ENCODE measurements at regions of chr9 and their contacts with region 1.

Region 1: DNA sequence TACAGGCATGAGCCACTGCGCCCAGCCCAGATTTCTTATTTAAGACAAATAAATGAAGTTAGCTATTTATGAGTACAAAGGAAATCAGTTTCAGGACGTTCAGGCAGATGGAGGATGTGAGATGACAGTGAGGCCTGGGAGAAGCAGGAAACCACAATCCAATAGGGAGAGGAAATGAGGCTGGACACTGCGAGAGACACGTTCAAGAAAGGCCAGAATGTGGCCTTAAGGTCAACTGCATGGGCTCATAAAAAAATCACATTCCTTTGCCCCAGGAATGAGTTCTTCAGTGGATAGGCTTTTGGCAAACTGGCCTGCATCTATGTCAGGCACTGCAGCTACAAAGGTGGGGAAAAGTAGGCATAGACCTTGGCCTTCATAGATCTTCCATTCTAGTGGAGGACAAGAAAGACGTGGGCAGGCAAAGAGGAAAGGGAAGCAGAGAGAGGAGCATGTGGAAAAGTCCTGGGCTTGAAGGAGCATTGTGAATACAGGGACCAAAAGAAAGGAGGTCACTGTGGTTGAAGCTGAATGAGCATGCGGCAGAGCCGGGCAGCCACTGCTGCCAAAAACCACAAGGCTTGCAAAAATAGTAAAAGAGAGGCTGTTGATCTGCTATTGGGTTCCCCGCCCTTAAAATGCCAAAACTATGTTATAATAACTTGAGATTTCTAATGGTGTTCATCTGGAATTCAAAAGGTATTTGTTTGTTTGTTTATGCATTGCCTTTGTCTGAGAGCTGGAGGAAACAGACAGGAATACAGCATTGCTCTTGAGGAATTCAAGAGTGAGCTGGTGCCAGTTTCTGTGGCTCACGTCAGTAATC is 133.0 kb downstream of the GNA14 start:
- DNase-seq: peak; percentile 94
- H3K4me3 ChIP-seq: no peak overlapping the region
- H3K27ac ChIP-seq: peak overlapping the region; percentile 82
- H3K4me1 ChIP-seq: peaks cover 31% of the 10 kb centered on the region
- H3K27me3 ChIP-seq: no peaks in the 10 kb centered on the region
- CTCF ChIP-seq: no peak
- POLR2A ChIP-seq: peak; percentile 57

Region 2: DNA sequence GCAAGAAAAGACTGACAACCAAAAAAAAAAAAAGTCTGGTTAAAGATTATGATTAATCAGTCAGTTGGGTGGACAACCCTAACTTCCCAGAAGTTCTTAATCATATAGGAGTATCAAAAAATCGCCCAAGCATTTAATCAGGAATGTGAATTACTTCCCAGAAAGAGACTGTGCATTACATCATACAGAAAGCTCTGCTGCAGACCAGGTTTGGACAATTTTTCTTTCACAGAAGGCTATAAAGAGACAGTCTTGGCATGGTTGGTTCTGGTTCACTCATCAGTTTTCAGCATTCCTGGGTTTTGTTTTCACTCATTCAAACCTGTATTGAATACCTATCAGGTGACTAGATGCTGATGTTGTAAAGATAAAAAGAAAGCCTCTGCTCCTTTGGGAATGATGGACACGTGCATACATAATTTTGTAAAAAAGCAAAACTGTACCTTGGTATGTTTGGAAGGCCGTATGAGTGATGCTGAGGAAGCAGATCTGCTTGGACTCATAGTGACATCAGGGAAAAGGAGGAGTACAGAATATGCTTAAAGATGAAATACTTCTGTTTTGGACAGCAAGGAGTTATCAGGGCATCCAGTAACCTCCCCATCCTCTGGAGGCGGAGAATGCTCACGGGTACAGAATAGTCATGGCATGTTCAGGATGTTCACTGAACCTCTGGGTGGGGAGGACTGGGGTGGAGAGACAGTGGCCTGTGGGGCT is 45.4 kb before region 1 on chr9:
- CTCF ChIA-PET with region 1: no interaction called
- POLR2A ChIA-PET with region 1: no interaction called
- dilution Hi-C with region 1: no loop called
- intact Hi-C with region 1: no loop called
- DNase-seq: no peak
- H3K4me3 ChIP-seq: no peak overlapping the region
- H3K27ac ChIP-seq: no peak overlapping the region
- H3K4me1 ChIP-seq: no peaks in the 10 kb centered on the region
- H3K27me3 ChIP-seq: peaks cover 0 to 2% of the 10 kb centered on the region in 2 experiments
- CTCF ChIP-seq: no peak
- POLR2A ChIP-seq: no peak

Region 3: GRCh38 chr9:77562019-77562748 is 47.1 kb after region 1 on chr9:
- CTCF ChIA-PET with region 1: no interaction called
- POLR2A ChIA-PET with region 1: no interaction called
- dilution Hi-C with region 1: no loop called
- intact Hi-C with region 1: loop called (anchors 5 kb)
- DNase-seq: no peak
- H3K4me3 ChIP-seq: no peak overlapping the region
- H3K27ac ChIP-seq: peak overlapping the region; percentile 43
- H3K4me1 ChIP-seq: peaks cover 14% of the 10 kb centered on the region
- H3K27me3 ChIP-seq: no peaks in the 10 kb centered on the region
- CTCF ChIP-seq: no peak
- POLR2A ChIP-seq: no peak

Region 4: DNA sequence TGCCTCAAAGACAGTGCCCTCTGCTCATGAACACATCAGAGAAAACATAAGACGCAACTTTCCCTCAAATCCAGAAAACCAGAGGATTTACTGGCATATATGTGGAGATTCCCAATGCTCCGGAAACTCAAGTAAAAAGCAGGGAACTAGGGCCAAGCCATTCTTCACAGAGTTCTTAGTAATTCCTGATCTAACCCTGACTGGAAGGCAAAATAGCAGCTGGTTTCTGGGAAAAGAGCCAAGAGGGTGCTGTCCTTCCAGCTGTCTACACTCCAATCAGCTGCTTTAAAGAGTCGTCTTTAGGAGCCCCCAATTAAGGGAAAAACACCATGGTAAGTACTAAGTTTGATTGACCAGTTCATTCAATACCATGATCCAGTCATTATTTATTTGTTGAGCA is 83.4 kb after region 1 on chr9:
- CTCF ChIA-PET with region 1: no interaction called
- POLR2A ChIA-PET with region 1: no interaction called
- dilution Hi-C with region 1: no loop called
- intact Hi-C with region 1: loop called (anchors 1 kb)
- DNase-seq: peak; percentile 89
- H3K4me3 ChIP-seq: no peak overlapping the region
- H3K27ac ChIP-seq: no peak overlapping the region
- H3K4me1 ChIP-seq: peaks cover 45% of the 10 kb centered on the region
- H3K27me3 ChIP-seq: no peaks in the 10 kb centered on the region
- CTCF ChIP-seq: no peak
- POLR2A ChIP-seq: no peak

Region 5: DNA sequence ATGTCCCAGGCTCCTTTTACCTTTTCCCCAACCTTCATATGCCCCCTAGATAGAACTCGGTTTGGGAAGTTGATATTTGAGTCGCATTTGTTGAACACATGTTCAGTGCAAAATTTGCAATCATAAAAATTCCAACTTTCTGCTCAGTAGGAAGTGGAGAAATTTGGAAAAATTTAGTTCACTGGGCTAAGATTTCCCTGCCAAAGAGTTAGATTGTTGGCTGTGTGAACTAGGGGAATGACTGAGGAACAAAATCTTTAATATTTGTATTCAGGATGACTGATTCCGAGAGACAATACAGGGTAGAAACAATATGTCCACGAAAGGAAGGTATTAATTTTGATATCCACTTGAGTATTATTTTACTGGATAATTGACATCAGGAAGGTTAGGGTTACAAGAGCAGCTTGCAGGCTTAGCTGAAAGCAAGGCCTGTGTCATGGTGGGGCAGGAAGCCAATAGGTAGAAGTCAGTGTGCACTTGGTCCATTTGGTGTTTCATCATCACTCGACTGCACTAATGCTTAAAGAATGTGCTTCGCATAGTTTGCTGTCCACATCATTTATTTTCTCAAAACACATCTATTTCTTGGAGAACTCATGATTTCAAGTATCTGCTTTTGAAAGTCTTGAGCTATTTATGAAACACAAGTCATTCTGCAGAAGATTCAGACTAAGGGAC is 192.4 kb after region 1 on chr9:
- CTCF ChIA-PET with region 1: interaction called, 5 read pairs
- POLR2A ChIA-PET with region 1: no interaction called
- dilution Hi-C with region 1: no loop called
- intact Hi-C with region 1: loop called (anchors 1 kb)
- DNase-seq: peak; percentile 96
- H3K4me3 ChIP-seq: peak overlapping the region in 1 of 3 experiments; percentile 46
- H3K27ac ChIP-seq: peak overlapping the region; percentile 82
- H3K4me1 ChIP-seq: peaks cover 53% of the 10 kb centered on the region
- H3K27me3 ChIP-seq: no peaks in the 10 kb centered on the region
- CTCF ChIP-seq: no peak
- POLR2A ChIP-seq: peak; percentile 24

Region 6: GRCh38 chr9:77731930-77732329 is 216.8 kb after region 1 on chr9:
- CTCF ChIA-PET with region 1: no interaction called
- POLR2A ChIA-PET with region 1: no interaction called
- dilution Hi-C with region 1: no loop called
- intact Hi-C with region 1: no loop called
- DNase-seq: no peak
- H3K4me3 ChIP-seq: no peak overlapping the region
- H3K27ac ChIP-seq: no peak overlapping the region
- H3K4me1 ChIP-seq: peaks cover 15% of the 10 kb centered on the region
- H3K27me3 ChIP-seq: no peaks in the 10 kb centered on the region
- CTCF ChIP-seq: no peak
- POLR2A ChIP-seq: no peak

Region 7: GRCh38 chr9:78207319-78207718 is 692.2 kb after region 1 on chr9:
- CTCF ChIA-PET with region 1: no interaction called
- POLR2A ChIA-PET with region 1: no interaction called
- dilution Hi-C with region 1: no loop called
- intact Hi-C with region 1: loop called (anchors 10 kb)
- DNase-seq: peak; percentile 86
- H3K4me3 ChIP-seq: no peak overlapping the region
- H3K27ac ChIP-seq: peak overlapping the region; percentile 87
- H3K4me1 ChIP-seq: peaks cover 9% of the 10 kb centered on the region
- H3K27me3 ChIP-seq: no peaks in the 10 kb centered on the region
- CTCF ChIP-seq: no peak
- POLR2A ChIP-seq: peak; percentile 39